Activated CD8-positive, alpha-beta T cell treated with anti-CD3 and anti-CD28 coated beads, Interleukin-2, amount 10 ng/mL, durations not matched to agents 7 days and 5 days (primary cell): ENCODE measurements at regions of chr15 and their contacts with region 1.

Region 1: DNA sequence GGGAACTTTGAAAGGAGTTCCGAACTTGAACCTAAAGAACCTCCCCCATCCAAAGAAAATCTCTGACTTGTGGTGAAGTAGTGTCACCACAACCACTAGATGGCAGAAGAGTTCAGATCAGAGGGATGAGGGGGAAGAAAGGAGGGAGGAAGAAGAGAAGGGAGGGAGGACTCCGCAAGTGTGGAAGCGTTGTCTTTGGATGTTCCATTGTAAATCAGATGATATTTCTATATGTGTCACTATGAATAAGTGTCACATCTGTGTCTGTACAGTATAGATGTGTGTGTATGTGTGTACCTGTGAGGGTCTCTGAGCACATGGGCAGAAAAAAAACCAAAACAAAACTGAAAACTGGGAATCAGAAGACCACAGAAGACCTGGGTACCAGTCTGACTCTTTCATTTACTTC is 16.9 kb downstream of the SLC24A1 start:
- DNase-seq: peak; percentile 66
- ATAC-seq: peak; percentile 75
- H3K4me3 Mint-ChIP-seq: peak overlapping the region; percentile 9
- H3K27ac Mint-ChIP-seq: no peak overlapping the region
- H3K4me1 Mint-ChIP-seq: peaks cover 10% of the 10 kb centered on the region
- H3K27me3 Mint-ChIP-seq: no peaks in the 10 kb centered on the region

Region 2: DNA sequence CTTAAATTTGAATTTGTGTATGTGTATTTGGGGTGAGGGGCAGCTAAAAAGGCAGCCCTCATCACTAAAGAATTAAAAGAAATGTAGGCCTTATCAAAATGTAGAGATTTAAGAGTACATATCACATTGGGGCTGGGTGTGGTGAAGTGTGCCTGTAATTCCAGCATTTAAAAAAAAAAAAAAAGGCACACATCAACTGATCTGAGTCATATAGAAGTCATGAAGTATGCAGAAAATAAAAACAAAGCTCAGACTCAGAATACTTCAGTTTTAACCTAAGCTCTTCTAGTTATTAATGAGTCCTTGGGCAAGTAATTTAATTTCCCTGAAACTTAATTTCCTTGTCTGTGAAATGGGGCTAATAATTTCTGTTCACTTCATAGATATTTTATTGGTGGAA is 14.7 kb after region 1 on chr15:
- CTCF ChIA-PET with region 1: interaction called, 12 read pairs
- POLR2A ChIA-PET with region 1: no interaction called
- DNase-seq: no peak
- ATAC-seq: no peak
- H3K4me3 Mint-ChIP-seq: no peak overlapping the region
- H3K27ac Mint-ChIP-seq: no peak overlapping the region
- H3K4me1 Mint-ChIP-seq: peaks cover 5% of the 10 kb centered on the region
- H3K27me3 Mint-ChIP-seq: no peaks in the 10 kb centered on the region

Region 3: GRCh38 chr15:65832549-65833364 is 194.1 kb after region 1 on chr15:
- CTCF ChIA-PET with region 1: interaction called, 22 read pairs
- POLR2A ChIA-PET with region 1: no interaction called
- DNase-seq: peak; percentile 72
- ATAC-seq: peak; percentile 77
- H3K4me3 Mint-ChIP-seq: peak overlapping the region; percentile 67
- H3K27ac Mint-ChIP-seq: peak overlapping the region; percentile 95
- H3K4me1 Mint-ChIP-seq: peaks cover 62% of the 10 kb centered on the region
- H3K27me3 Mint-ChIP-seq: no peaks in the 10 kb centered on the region

Region 4: DNA sequence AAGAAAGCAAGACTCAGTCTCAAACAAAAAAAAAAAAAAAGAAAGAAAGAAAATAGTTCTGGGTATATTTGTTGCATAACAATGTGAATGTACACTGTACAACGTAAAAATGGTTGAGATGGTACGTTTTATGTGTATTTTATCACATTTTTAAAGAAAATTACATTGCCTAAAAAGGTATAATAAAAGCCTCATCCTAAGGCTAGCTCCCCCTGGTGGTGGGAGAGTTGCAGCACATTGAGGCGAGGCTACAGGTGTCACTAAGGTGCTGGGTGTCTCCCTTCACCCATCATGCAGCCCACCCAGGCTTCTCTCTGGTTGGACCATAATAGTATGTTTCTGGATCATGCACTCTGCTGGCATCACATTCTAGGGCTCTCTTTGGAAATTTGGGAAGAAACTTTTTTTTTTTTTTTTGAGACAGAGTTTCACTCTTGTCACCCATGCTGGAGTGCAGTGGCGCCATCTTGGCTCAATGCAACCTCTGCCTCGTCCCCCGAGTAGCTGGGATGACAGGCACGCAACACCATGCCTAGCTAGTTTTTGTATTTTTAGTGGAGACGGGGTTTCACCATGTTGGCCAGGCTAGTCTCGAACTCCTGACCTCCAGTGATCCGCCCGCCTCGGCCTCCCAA is 218.3 kb after region 1 on chr15:
- CTCF ChIA-PET with region 1: interaction called, 35 read pairs
- POLR2A ChIA-PET with region 1: no interaction called
- DNase-seq: peak; percentile 90
- ATAC-seq: peak; percentile 93
- H3K4me3 Mint-ChIP-seq: no peak overlapping the region
- H3K27ac Mint-ChIP-seq: no peak overlapping the region
- H3K4me1 Mint-ChIP-seq: peaks cover 8% of the 10 kb centered on the region
- H3K27me3 Mint-ChIP-seq: peaks cover 6% of the 10 kb centered on the region

Region 5: DNA sequence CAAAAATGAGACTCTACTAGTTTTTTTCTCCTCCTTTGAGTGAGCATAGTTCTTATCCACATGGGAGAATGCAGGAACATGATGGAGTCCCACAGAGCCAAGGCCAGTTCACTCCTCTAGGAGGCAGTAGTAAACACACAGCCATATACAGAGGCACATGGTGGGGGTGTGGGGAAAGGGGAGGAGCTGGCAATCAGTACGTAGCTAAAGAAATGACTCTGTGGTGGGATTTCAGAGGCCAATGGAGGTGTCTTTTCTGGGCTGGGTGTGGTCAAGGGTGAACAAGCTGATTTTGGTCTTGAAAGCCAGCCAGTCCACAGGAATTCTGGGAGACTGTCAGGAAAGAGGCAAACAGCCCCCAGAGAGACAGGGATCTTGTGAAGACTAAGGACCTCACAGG is 224.0 kb after region 1 on chr15:
- CTCF ChIA-PET with region 1: interaction called, 35 read pairs
- POLR2A ChIA-PET with region 1: no interaction called
- DNase-seq: peak; percentile 80
- ATAC-seq: peak; percentile 96
- H3K4me3 Mint-ChIP-seq: no peak overlapping the region
- H3K27ac Mint-ChIP-seq: no peak overlapping the region
- H3K4me1 Mint-ChIP-seq: peaks cover 10% of the 10 kb centered on the region
- H3K27me3 Mint-ChIP-seq: peaks cover 6% of the 10 kb centered on the region